B cell (primary cell): ENCODE measurements at regions of chr10 and their contacts with region 1.

Region 1: DNA sequence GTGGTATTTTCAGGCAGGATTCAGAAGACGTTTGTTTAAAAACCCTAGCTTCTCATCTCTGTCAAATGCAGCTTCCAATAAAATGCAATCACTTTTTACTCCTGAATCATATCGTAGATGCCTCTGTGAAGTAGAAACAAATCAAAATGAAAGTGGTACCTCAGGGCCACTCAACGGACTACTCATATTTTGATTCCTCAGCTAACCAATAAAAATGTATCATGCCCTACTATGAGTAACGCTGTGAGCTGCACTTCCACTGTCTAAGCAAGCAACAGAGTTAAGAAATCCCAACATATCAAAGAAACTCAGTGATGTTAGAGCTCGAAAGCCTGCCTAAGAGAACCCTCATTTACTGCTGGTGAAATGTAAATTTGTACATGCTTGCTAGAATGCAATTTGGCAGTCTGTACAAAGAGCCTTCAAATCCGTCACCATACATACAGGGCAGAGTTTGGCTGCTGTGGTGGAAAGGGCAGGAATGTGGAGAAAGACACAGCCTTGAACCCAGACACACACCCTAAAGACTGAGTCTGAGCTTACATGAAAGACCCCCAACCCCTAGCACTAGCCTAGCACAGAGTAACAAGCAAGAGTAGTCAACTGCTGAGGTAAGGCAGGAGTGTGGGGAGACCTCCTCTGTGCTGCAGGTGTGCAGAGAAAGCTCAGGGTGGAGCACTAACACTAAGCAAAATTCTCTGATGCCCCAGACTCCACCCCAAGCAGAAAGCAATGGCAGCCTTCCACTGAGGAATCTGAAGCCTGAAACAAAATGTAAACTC is 151.5 kb downstream of the ANK3 start:
- DNase-seq: peak; percentile 68
- ATAC-seq: peak; percentile 40
- H3K4me3 ChIP-seq: peak overlapping the region in 4 of 5 experiments; percentile 32 to 68 (median 52)
- H3K4me3 Mint-ChIP-seq: peak overlapping the region; percentile 74
- H3K27ac ChIP-seq: peak overlapping the region; percentile 83 to 93
- H3K27ac Mint-ChIP-seq: peak overlapping the region; percentile 92
- H3K4me1 ChIP-seq: peaks cover 56 to 57% of the 10 kb centered on the region in 2 donors
- H3K4me1 Mint-ChIP-seq: peaks cover 56% of the 10 kb centered on the region
- H3K27me3 ChIP-seq: no peaks in the 10 kb centered on the region
- H3K27me3 Mint-ChIP-seq: no peaks in the 10 kb centered on the region
- CTCF ChIP-seq: peak; percentile 49

Region 2: DNA sequence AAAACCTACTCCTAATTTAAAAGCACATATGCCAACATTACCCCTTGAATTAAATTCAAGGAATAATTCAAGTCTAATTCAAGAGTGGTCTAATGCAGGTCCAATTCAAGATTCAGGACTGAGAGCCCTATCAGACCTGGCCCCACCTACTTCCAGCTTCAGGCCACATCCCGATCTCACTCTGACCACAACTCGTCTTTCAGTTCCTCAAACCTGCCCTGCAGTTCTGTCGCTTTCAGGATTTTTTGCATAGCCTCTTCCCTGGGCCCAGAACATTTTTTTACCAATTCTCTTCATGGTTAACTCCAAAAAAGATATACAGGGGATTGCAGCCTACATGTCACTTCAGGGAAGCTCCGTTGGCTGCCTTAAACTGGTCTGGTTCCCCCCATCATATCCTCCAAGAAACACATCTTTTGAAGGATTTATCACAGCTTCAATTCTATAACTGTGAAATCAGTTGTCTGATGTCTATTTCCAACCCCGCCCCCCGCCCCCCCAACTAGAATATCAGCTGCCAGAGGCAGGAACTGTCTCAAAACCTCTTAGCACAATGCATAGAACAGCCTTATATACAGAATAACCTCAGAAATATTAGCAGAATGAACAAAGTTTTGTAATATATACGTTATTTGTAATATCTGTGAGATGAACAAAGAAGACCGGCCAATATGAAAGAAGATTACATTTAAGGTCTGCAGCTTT is 352.6 kb before region 1 on chr10:
- CTCF ChIA-PET with region 1: no interaction called
- POLR2A ChIA-PET with region 1: no interaction called
- intact Hi-C with region 1: loop called (anchors 1 kb)
- DNase-seq: peak; percentile 90
- ATAC-seq: peak; percentile 96
- H3K4me3 ChIP-seq: peak overlapping the region in 3 of 5 experiments; percentile 0 to 47 (median 11)
- H3K4me3 Mint-ChIP-seq: peak overlapping the region; percentile 62
- H3K27ac ChIP-seq: peak overlapping the region in 1 of 2 donors; percentile 42
- H3K27ac Mint-ChIP-seq: peak overlapping the region; percentile 79
- H3K4me1 ChIP-seq: peaks cover 67 to 76% of the 10 kb centered on the region in 2 donors
- H3K4me1 Mint-ChIP-seq: peaks cover 87% of the 10 kb centered on the region
- H3K27me3 ChIP-seq: no peaks in the 10 kb centered on the region
- H3K27me3 Mint-ChIP-seq: no peaks in the 10 kb centered on the region
- CTCF ChIP-seq: no peak

Region 3: GRCh38 chr10:60162631-60163030 is 75.5 kb before region 1 on chr10:
- CTCF ChIA-PET with region 1: no interaction called
- POLR2A ChIA-PET with region 1: no interaction called
- intact Hi-C with region 1: no loop called
- DNase-seq: no peak
- ATAC-seq: no peak
- H3K4me3 ChIP-seq: no peak overlapping the region
- H3K4me3 Mint-ChIP-seq: no peak overlapping the region
- H3K27ac ChIP-seq: no peak overlapping the region
- H3K27ac Mint-ChIP-seq: no peak overlapping the region
- H3K4me1 ChIP-seq: no peaks in the 10 kb centered on the region
- H3K4me1 Mint-ChIP-seq: no peaks in the 10 kb centered on the region
- H3K27me3 ChIP-seq: peaks cover 0 to 3% (median 0%) of the 10 kb centered on the region in 4 experiments
- H3K27me3 Mint-ChIP-seq: no peaks in the 10 kb centered on the region
- CTCF ChIP-seq: no peak

Region 4: DNA sequence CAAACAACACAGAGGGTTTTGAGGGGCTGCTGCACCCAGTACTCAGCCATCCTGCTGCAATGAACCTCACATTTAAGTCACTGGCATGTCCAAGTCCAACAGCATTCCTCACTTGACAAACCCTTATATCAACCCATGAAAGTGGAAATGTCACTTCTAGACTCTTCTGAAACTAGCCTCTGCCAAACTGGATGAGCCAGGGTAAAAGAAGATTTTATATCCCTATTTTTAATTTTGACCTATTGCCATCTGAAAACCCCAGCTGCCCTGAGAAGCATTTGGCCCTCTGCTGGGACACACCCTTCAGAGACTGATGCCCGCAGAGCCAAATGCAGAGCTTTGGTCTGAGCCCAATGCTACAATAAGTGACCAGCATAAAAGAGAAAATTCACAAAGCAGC is 49.6 kb before region 1 on chr10:
- CTCF ChIA-PET with region 1: no interaction called
- POLR2A ChIA-PET with region 1: no interaction called
- intact Hi-C with region 1: no loop called
- DNase-seq: no peak
- ATAC-seq: no peak
- H3K4me3 ChIP-seq: no peak overlapping the region
- H3K4me3 Mint-ChIP-seq: no peak overlapping the region
- H3K27ac ChIP-seq: no peak overlapping the region
- H3K27ac Mint-ChIP-seq: no peak overlapping the region
- H3K4me1 ChIP-seq: no peaks in the 10 kb centered on the region
- H3K4me1 Mint-ChIP-seq: no peaks in the 10 kb centered on the region
- H3K27me3 ChIP-seq: no peaks in the 10 kb centered on the region
- H3K27me3 Mint-ChIP-seq: no peaks in the 10 kb centered on the region
- CTCF ChIP-seq: no peak

Region 5: DNA sequence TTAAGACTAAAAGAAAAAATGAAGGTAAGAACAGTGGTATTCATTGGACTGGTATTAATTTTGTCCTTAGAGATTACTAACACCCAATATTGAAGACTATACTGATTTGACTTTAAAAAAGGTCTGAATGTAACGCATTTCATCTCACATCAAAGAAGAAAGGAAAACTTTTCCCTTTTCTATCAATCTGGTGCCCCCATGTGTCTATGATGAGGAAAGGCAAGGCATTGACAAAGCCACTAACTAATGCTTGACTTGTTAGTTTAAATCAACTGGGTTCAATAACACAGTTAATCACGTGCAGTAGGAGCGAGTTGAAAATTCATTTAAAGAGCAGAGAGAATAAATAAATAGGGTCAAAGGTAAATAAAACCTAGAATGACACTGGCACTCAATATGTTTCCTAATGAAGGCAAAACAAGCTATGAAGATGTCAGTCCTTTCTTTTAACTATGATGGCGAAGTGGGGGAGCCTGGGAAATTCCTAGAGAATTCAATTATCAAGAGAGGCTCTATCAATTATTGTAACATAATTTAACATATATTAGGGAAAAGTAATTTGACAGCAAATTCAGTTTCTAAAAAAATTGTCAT is 29.4 kb before region 1 on chr10:
- CTCF ChIA-PET with region 1: interaction called, 168 read pairs
- POLR2A ChIA-PET with region 1: no interaction called
- intact Hi-C with region 1: loop called (anchors 2 kb)
- DNase-seq: peak; percentile 36
- ATAC-seq: no peak
- H3K4me3 ChIP-seq: no peak overlapping the region
- H3K4me3 Mint-ChIP-seq: no peak overlapping the region
- H3K27ac ChIP-seq: no peak overlapping the region
- H3K27ac Mint-ChIP-seq: no peak overlapping the region
- H3K4me1 ChIP-seq: peaks cover 14 to 26% of the 10 kb centered on the region in 2 donors
- H3K4me1 Mint-ChIP-seq: peaks cover 37% of the 10 kb centered on the region
- H3K27me3 ChIP-seq: no peaks in the 10 kb centered on the region
- H3K27me3 Mint-ChIP-seq: no peaks in the 10 kb centered on the region
- CTCF ChIP-seq: peak; percentile 67

Region 6: DNA sequence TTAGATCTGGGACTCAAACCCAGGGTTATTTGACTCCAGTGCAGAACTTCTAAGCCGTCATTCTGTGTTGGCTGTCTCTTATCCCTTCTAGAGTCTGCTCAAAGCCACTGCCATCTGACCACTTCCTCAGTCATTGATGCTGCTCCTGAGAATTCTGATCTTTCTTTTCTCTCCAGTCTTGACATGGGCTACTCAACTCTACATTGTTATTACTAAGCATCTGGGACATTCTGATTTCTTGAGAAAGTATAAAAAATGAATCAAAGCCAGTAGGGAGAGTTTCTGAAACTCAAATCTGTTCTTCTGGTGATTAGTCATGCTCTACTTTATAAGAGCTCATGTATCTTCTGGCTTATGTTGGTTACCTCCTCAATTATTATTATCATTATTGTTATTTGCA is 102.8 kb after region 1 on chr10:
- CTCF ChIA-PET with region 1: interaction called, 35 read pairs
- POLR2A ChIA-PET with region 1: no interaction called
- intact Hi-C with region 1: no loop called
- DNase-seq: no peak
- ATAC-seq: no peak
- H3K4me3 ChIP-seq: no peak overlapping the region
- H3K4me3 Mint-ChIP-seq: no peak overlapping the region
- H3K27ac ChIP-seq: no peak overlapping the region
- H3K27ac Mint-ChIP-seq: no peak overlapping the region
- H3K4me1 ChIP-seq: no peaks in the 10 kb centered on the region
- H3K4me1 Mint-ChIP-seq: no peaks in the 10 kb centered on the region
- H3K27me3 ChIP-seq: no peaks in the 10 kb centered on the region
- H3K27me3 Mint-ChIP-seq: no peaks in the 10 kb centered on the region
- CTCF ChIP-seq: no peak

Region 7: GRCh38 chr10:60513281-60513680 is 275.1 kb after region 1 on chr10:
- CTCF ChIA-PET with region 1: no interaction called
- POLR2A ChIA-PET with region 1: no interaction called
- intact Hi-C with region 1: loop called (anchors 5 kb)
- DNase-seq: peak; percentile 55
- ATAC-seq: peak; percentile 58
- H3K4me3 ChIP-seq: no peak overlapping the region
- H3K4me3 Mint-ChIP-seq: no peak overlapping the region
- H3K27ac ChIP-seq: no peak overlapping the region
- H3K27ac Mint-ChIP-seq: no peak overlapping the region
- H3K4me1 ChIP-seq: peaks cover 7 to 8% of the 10 kb centered on the region in 2 donors
- H3K4me1 Mint-ChIP-seq: peaks cover 18% of the 10 kb centered on the region
- H3K27me3 ChIP-seq: no peaks in the 10 kb centered on the region
- H3K27me3 Mint-ChIP-seq: peaks cover 2% of the 10 kb centered on the region
- CTCF ChIP-seq: no peak

Region 8: DNA sequence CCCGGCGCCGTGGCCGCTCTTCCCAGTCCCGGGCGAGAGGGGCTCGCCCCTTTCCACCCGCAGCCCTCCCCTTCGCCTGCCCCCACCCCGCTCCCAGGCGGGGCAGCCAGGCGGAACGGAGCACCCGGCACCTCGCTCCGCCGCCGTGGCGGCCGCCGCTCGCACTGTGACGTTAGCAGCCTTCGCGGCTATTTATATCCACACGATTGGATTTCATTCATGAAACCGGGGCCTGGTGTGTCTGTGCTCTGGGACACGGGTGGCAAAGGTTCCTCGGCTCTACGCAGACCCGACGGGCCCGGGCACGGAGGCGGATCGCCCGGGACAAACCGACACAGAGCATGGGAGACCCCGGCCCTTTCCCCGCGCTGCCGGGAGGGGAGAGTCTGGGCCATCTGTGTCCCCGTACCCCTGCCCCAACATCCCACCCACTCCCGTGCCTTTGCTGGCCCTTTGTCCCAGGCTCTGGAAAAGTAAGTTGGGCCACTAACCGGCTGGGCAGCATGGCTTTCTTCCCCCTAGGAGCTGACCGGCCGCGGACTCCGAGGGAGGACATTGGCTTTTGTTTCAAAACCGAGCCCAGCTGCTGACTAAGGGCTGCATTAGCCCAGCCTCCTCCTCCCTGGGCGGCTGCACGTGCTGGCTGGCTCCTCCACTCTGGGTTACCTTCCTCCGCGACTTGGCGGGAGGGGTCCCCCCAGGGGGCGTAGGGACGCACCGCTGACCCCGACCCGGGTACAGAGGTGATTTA is 706.2 kb after region 1 on chr10 and contains the start of gene RHOBTB1:
- CTCF ChIA-PET with region 1: no interaction called
- POLR2A ChIA-PET with region 1: no interaction called
- intact Hi-C with region 1: loop called (anchors 10 kb)
- DNase-seq: peak; percentile 79
- ATAC-seq: peak; percentile 65
- H3K4me3 ChIP-seq: peak within 1 kb of the TSS; percentile 51 to 71 (median 67)
- H3K4me3 Mint-ChIP-seq: peak within 1 kb of the TSS; percentile 89
- H3K27ac ChIP-seq: peak within 1 kb of the TSS in 1 of 2 donors; percentile 32
- H3K27ac Mint-ChIP-seq: peak within 1 kb of the TSS; percentile 46
- H3K4me1 ChIP-seq: peaks cover 17 to 24% of the 10 kb centered on the region in 2 donors
- H3K4me1 Mint-ChIP-seq: peaks cover 14% of the 10 kb centered on the region
- H3K27me3 ChIP-seq: peaks cover 0 to 22% (median 9%) of the 10 kb centered on the region in 4 experiments
- H3K27me3 Mint-ChIP-seq: peaks cover 21% of the 10 kb centered on the region
- CTCF ChIP-seq: no peak
- total RNA-seq, gene RHOBTB1: 0.07 and 1.1 TPM in 2 replicates